OCI-LY7 (cell line): ENCODE measurements at regions of chr2 and their contacts with region 1.

Region 1: GRCh38 chr2:80530442-80531064 is 226.0 kb upstream of the LRRTM1 start:
- DNase-seq: peak; percentile 60
- H3K4me3 ChIP-seq: no peak overlapping the region
- H3K27ac ChIP-seq: peak overlapping the region; percentile 48
- H3K4me1 ChIP-seq: peaks cover 29% of the 10 kb centered on the region
- CTCF ChIP-seq: no peak

Region 2: DNA sequence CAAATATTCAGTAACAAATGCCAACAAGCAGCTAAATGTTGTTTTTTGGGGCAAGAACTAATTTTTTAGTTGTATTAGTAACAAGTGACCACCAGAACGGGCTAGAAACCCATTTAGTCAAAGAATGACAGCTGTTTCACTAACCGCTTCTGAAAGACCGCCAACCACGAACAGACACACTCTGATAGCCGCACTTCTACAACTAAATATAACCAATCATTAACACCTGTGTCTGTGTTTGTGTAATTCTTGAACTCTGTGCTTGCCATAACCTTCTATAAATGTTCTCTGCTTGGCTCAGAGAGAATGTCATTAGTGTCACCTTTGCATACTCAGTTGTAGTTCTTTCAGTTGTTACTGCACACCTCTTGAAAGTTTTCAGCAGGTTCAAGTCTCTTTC is 300.3 kb after region 1 on chr2:
- CTCF ChIA-PET with region 1: no interaction called
- POLR2A ChIA-PET with region 1: no interaction called
- intact Hi-C with region 1: loop called (anchors 1 kb)
- DNase-seq: peak; percentile 86
- H3K4me3 ChIP-seq: peak overlapping the region; percentile 50
- H3K27ac ChIP-seq: peak overlapping the region; percentile 96
- H3K4me1 ChIP-seq: peaks cover 53% of the 10 kb centered on the region
- CTCF ChIP-seq: no peak

Region 3: DNA sequence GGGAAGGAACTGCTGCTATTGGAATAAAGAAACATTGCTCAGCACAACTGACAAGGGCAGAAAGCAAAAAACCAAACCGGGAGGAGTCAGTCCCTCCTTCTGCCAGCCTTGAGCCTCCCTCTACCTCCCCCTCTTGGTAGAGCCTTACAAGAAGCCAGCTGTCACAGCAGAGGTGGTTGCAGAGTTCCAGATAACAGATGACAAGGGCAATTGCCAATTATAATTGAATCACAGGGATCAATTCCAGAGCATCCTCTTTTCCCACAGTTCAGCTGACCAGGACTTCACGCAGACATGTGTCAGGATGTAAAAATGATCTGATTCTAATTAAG is 322.2 kb after region 1 on chr2:
- CTCF ChIA-PET with region 1: no interaction called
- POLR2A ChIA-PET with region 1: no interaction called
- intact Hi-C with region 1: loop called (anchors 2 kb)
- DNase-seq: peak; percentile 56
- H3K4me3 ChIP-seq: no peak overlapping the region
- H3K27ac ChIP-seq: peak overlapping the region; percentile 32
- H3K4me1 ChIP-seq: peaks cover 19% of the 10 kb centered on the region
- CTCF ChIP-seq: peak; percentile 58